Activated naive CD4-positive, alpha-beta T cell treated with anti-CD3 and anti-CD28 coated beads for 36 hours (primary cell): ENCODE measurements at regions of chr7 and their contacts with region 1.

Region 1: GRCh38 chr7:102814025-102814471 is 65.2 kb downstream of the FAM185A start:
- DNase-seq: no peak
- H3K4me3 Mint-ChIP-seq: no peak overlapping the region
- H3K27ac Mint-ChIP-seq: no peak overlapping the region
- H3K4me1 Mint-ChIP-seq: peaks cover 2% of the 10 kb centered on the region
- H3K27me3 Mint-ChIP-seq: no peaks in the 10 kb centered on the region

Region 2: GRCh38 chr7:102152672-102153585 is 661.1 kb before region 1 on chr7:
- CTCF ChIA-PET with region 1: no interaction called
- intact Hi-C with region 1: no loop called
- DNase-seq: no peak
- H3K4me3 Mint-ChIP-seq: no peak overlapping the region
- H3K27ac Mint-ChIP-seq: no peak overlapping the region
- H3K4me1 Mint-ChIP-seq: no peaks in the 10 kb centered on the region
- H3K27me3 Mint-ChIP-seq: no peaks in the 10 kb centered on the region

Region 3: GRCh38 chr7:102834999-102835398 is 21.0 kb after region 1 on chr7:
- CTCF ChIA-PET with region 1: interaction called, 3 read pairs
- intact Hi-C with region 1: loop called (anchors 1 kb)
- DNase-seq: peak; percentile 26
- H3K4me3 Mint-ChIP-seq: no peak overlapping the region
- H3K27ac Mint-ChIP-seq: no peak overlapping the region
- H3K4me1 Mint-ChIP-seq: peaks cover 5% of the 10 kb centered on the region
- H3K27me3 Mint-ChIP-seq: no peaks in the 10 kb centered on the region

Region 4: GRCh38 chr7:102925976-102926782 is 112.1 kb after region 1 on chr7:
- CTCF ChIA-PET with region 1: no interaction called
- intact Hi-C with region 1: no loop called
- DNase-seq: no peak
- H3K4me3 Mint-ChIP-seq: no peak overlapping the region
- H3K27ac Mint-ChIP-seq: no peak overlapping the region
- H3K4me1 Mint-ChIP-seq: no peaks in the 10 kb centered on the region
- H3K27me3 Mint-ChIP-seq: no peaks in the 10 kb centered on the region